Ascending aorta (tissue), 2 donors: ENCODE measurements at regions of chr9 and their contacts with region 1.

Region 1: GRCh38 chr9:93134015-93134739 is at the start of gene NINJ1:
- DNase-seq: peak in 1 of 2 donors; percentile 86
- H3K4me3 ChIP-seq: peak within 1 kb of the TSS; percentile 77 to 91
- H3K27ac ChIP-seq: peak within 1 kb of the TSS; percentile 98 to 99
- H3K4me1 ChIP-seq: peaks cover 27 to 38% of the 10 kb centered on the region in 2 donors
- H3K27me3 ChIP-seq: no peaks in the 10 kb centered on the region
- CTCF ChIP-seq: peak in 1 of 3 experiments; percentile 21
- total RNA-seq, gene NINJ1: 156 TPM

Region 2: DNA sequence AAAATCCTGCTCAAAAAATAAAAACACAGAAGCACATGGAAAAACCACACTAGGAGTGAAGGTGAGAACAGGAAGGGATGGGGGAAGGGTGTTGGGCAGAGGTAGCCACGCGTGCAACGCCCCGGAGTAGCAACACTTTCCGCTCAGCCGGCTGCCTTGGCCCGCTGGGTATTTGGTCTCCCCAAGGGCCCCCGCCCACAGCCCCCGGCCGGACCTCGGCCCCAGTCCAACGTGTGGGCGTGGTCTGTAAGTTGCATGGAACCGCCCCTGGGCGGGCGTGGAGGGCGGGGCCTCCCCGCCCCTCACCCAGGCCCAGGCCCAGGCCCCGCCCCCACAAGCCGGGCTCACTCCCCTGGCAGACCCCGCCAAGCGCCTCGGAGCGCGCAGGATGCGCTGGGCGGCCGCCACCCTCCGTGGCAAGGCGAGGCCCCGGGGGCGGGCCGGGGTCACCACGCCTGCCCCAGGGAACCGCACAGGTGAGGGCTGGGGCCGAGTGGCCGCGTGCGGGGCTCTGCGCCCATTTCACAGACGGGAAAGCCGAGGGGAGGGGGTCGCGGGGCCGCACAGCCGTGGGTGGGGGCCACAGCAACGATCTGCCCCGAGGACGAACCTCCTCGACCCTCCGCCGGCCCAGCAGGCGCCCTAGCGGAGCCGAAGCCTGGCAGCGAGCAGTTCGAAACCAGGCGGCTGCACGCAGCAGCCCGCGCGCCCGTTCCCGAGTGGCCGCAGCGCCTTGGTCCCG is 75.7 kb before region 1 on chr9 and contains the start of gene SUSD3:
- intact Hi-C with region 1: loop called (anchors 2 kb)
- DNase-seq: peak in 1 of 2 donors; percentile 87
- H3K4me3 ChIP-seq: peak within 1 kb of the TSS; percentile 64 to 74
- H3K27ac ChIP-seq: peak within 1 kb of the TSS; percentile 90 to 92
- H3K4me1 ChIP-seq: peaks cover 28 to 52% of the 10 kb centered on the region in 2 donors
- H3K27me3 ChIP-seq: no peaks in the 10 kb centered on the region
- CTCF ChIP-seq: no peak
- total RNA-seq, gene SUSD3: not detected

Region 3: DNA sequence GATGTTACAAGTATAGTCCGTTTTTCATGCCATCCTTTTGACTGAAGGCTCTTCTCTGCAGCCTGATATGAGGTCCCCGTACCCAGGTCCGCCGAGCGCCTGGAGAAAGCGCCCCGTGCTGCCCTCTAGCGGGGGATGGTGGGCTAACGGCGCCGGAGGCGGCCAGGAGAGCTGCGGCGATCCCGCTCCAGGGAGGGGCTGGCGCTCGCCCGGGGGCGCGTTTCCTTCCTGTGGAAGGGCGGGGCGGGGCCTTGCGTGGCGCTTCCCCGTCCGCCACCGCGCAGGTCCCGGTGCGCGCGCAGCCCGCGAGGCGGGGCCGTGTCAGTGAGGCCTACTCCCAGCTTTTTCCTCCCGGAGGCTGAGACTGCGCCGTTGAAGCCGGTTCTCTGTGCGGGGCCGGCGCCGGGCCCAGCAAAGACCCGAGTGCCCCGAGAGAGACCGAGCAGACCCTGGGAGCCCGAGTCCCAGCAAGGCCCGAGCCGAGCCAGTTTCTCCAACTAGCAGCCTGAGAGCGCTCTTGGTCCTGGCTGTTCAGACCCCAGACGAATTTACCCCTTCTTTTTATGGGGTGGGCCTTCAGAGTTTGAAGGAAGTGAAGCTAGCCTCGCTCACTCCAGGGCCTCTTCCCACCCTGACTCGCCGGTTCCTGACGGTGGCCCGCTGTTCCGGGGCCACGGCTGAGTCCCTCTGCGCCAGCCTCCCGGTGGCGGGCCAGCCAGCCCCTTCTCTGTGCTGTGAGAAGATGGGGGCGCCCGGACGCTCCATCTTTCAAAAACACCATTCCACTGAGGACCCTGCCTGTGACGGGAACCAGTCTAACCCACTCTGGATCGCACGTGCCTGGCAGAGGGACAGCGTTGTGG is 432.5 kb after region 1 on chr9:
- intact Hi-C with region 1: loop called (anchors 10 kb)
- DNase-seq: peak; percentile 86 to 99
- H3K4me3 ChIP-seq: peak overlapping the region; percentile 69 to 91
- H3K27ac ChIP-seq: peak overlapping the region; percentile 93 to 99
- H3K4me1 ChIP-seq: peaks cover 6 to 10% of the 10 kb centered on the region in 2 donors
- H3K27me3 ChIP-seq: no peaks in the 10 kb centered on the region
- CTCF ChIP-seq: peak; percentile 92 to 98 (median 96)